Posterior vena cava (tissue), 2 donors: ENCODE measurements at regions of chr7 and their contacts with region 1.

Region 1: DNA sequence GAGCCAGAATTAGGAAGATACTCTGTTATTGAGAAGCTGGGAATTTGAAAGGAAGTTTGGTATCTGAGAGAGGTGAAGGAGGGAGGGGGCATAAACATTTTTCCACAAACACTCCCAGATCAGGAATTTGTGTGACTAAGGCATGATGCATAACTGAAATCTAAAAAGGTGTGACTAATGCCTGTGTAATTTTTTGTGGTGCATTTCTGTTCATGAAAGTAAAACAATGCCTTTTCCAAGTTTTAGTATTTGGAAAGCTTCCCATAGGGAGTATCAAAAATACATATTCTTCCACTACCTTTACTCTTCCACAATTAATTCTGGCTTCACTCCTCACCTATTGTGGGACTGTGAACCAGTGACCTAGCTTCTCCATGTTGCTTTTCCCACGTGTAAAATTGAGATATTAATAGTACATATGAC is 56.4 kb upstream of the CAV2 start:
- DNase-seq: no peak

Region 2: GRCh38 chr7:116499168-116500077 is 56.3 kb after region 1 on chr7 and contains the start of gene CAV2:
- intact Hi-C with region 1: loop called in 1 of 2 experiments (anchors 10 kb)
- DNase-seq: peak; percentile 90
- total RNA-seq, gene CAV2: 81.9 to 102 TPM